HCT116 (cell line): ENCODE measurements at regions of chr4 and their contacts with region 1.

Region 1: DNA sequence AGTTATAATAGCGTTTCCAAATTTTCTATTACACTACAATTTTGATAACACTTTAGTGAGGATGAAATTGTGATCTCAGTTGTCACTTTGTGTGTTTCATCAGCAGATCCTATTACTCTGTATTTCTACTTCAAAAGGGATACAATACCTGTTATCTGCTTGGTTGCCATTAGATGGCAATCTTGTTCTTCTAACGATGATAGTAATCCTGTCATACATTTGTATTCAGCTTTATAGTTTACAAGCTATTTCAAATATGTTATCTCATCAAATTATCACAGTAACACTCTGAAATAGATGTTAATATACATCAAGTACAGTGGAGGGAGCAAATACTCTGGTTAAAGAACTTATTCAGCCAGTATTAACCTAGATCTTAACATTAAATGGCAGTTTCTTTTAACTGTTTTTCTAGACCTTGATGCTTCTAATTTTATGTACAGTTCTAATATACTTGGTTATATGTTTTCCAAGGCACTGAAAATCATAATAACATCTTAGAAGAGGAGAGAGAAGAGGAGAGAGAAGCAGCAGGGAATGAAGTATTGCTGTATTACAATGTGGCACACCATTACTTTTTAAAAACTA is 292.0 kb downstream of the CCSER1 start:
- DNase-seq: peak; percentile 3
- ATAC-seq: no peak
- H3K4me3 ChIP-seq: no peak overlapping the region
- H3K27ac ChIP-seq: no peak overlapping the region
- H3K4me1 ChIP-seq: no peaks in the 10 kb centered on the region
- H3K27me3 ChIP-seq: no peaks in the 10 kb centered on the region
- CTCF ChIP-seq: peak; percentile 11 to 55 (median 26); a peak in 3 of 6 replicates
- POLR2A ChIP-seq: no peak
- RAD21 ChIP-seq: peak; percentile 55

Region 2: GRCh38 chr4:90515191-90515590 is 96.0 kb after region 1 on chr4:
- CTCF ChIA-PET with region 1: no interaction called
- POLR2A ChIA-PET with region 1: no interaction called
- RAD21 ChIA-PET with region 1: no interaction called
- intact Hi-C with region 1: no loop called
- DNase-seq: no peak
- ATAC-seq: no peak
- H3K4me3 ChIP-seq: no peak overlapping the region
- H3K27ac ChIP-seq: no peak overlapping the region
- H3K4me1 ChIP-seq: no peaks in the 10 kb centered on the region
- H3K27me3 ChIP-seq: no peaks in the 10 kb centered on the region
- CTCF ChIP-seq: no peak
- POLR2A ChIP-seq: no peak
- RAD21 ChIP-seq: no peak

Region 3: GRCh38 chr4:90670183-90670582 is 251.0 kb after region 1 on chr4:
- CTCF ChIA-PET with region 1: no interaction called
- POLR2A ChIA-PET with region 1: no interaction called
- RAD21 ChIA-PET with region 1: no interaction called
- intact Hi-C with region 1: no loop called
- DNase-seq: no peak
- ATAC-seq: no peak
- H3K4me3 ChIP-seq: no peak overlapping the region
- H3K27ac ChIP-seq: no peak overlapping the region
- H3K4me1 ChIP-seq: no peaks in the 10 kb centered on the region
- H3K27me3 ChIP-seq: no peaks in the 10 kb centered on the region
- CTCF ChIP-seq: no peak
- POLR2A ChIP-seq: no peak
- RAD21 ChIP-seq: no peak

Region 4: GRCh38 chr4:91113130-91113706 is 694.0 kb after region 1 on chr4:
- CTCF ChIA-PET with region 1: interaction called, 13 read pairs
- POLR2A ChIA-PET with region 1: no interaction called
- RAD21 ChIA-PET with region 1: interaction called in 1 of 2 experiments, 3 read pairs
- intact Hi-C with region 1: loop called (anchors 5 kb)
- DNase-seq: peak; percentile 28
- ATAC-seq: peak; percentile 53; the same call in 1 of the 2 replicates
- H3K4me3 ChIP-seq: no peak overlapping the region
- H3K27ac ChIP-seq: no peak overlapping the region
- H3K4me1 ChIP-seq: no peaks in the 10 kb centered on the region
- H3K27me3 ChIP-seq: no peaks in the 10 kb centered on the region
- CTCF ChIP-seq: peak; percentile 22 to 76 (median 61); a peak in 4 of 6 replicates
- POLR2A ChIP-seq: no peak
- RAD21 ChIP-seq: peak; percentile 73